GM12878 (cell line): ENCODE measurements at regions of chr15 and their contacts with region 1.

Region 1: GRCh38 chr15:101008158-101009139 is 89.3 kb downstream of the LRRK1 start:
- DNase-seq: peak; percentile 40
- ATAC-seq: peak; percentile 95
- H3K4me3 ChIP-seq: peak overlapping the region; percentile 73
- H3K27ac ChIP-seq: peak overlapping the region; percentile 40; the same call in 1 of the 2 replicates
- H3K4me1 ChIP-seq: peaks cover 11% of the 10 kb centered on the region
- H3K27me3 ChIP-seq: no peaks in the 10 kb centered on the region
- CTCF ChIP-seq: peak; percentile 96 to 100 (median 98)
- EP300 ChIP-seq: no peak
- POLR2A ChIP-seq: no peak; the same call in none of the 2 replicates
- RAD21 ChIP-seq: peak; percentile 67

Region 2: DNA sequence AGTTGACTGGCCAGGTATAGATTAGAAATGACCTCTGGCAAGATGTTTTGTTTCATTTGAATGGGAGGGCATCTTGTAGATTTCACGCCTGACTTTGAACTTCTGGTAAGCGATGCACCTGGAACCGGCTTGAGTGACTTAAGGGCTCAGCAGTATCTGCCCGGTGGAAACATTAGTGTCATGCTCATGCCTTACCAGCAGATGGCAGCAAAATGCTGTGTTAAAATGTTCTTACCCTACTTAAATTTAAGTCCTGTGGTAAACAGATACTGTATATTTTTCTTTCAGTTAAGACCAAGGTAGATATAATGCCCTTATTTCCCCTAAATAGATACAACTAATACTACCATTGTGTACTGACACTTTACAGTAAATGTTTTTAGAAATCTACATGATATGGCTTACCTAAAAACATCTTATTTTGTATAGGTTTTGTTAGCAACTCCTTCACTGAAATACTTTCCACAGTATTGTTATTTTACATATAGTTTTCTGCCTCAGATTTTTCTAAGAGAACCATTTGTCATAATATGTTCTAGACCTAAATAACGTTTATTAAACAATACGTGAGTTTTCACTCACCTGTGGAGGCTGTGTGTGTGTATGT is 380.6 kb before region 1 on chr15:
- CTCF ChIA-PET with region 1: interaction called, 13 read pairs
- POLR2A ChIA-PET with region 1: no interaction called
- RAD21 ChIA-PET with region 1: no interaction called
- SMC1A ChIA-PET with region 1: interaction called, 9 read pairs
- in situ Hi-C with region 1: loop called (anchors 5 kb)
- intact Hi-C with region 1: loop called (anchors 2 kb)
- DNase-seq: peak; percentile 43
- ATAC-seq: peak; percentile 92
- H3K4me3 ChIP-seq: no peak overlapping the region
- H3K27ac ChIP-seq: no peak overlapping the region
- H3K4me1 ChIP-seq: no peaks in the 10 kb centered on the region
- H3K27me3 ChIP-seq: no peaks in the 10 kb centered on the region
- CTCF ChIP-seq: peak; percentile 73 to 86 (median 80); a peak in 5 of 6 replicates
- EP300 ChIP-seq: no peak
- POLR2A ChIP-seq: no peak
- RAD21 ChIP-seq: peak; percentile 73

Region 3: GRCh38 chr15:100873029-100873677 is 135.3 kb before region 1 on chr15:
- CTCF ChIA-PET with region 1: interaction called, 22 read pairs
- POLR2A ChIA-PET with region 1: no interaction called
- RAD21 ChIA-PET with region 1: interaction called, 11 read pairs
- SMC1A ChIA-PET with region 1: interaction called, 5 read pairs
- in situ Hi-C with region 1: no loop called
- intact Hi-C with region 1: no loop called
- DNase-seq: peak; percentile 39
- ATAC-seq: peak; percentile 87
- H3K4me3 ChIP-seq: no peak overlapping the region
- H3K27ac ChIP-seq: no peak overlapping the region
- H3K4me1 ChIP-seq: no peaks in the 10 kb centered on the region
- H3K27me3 ChIP-seq: peaks cover 3% of the 10 kb centered on the region in 2 experiments; a peak in 3 of 4 replicates
- CTCF ChIP-seq: peak; percentile 80 to 93 (median 89)
- EP300 ChIP-seq: no peak
- POLR2A ChIP-seq: no peak
- RAD21 ChIP-seq: peak; percentile 82

Region 4: DNA sequence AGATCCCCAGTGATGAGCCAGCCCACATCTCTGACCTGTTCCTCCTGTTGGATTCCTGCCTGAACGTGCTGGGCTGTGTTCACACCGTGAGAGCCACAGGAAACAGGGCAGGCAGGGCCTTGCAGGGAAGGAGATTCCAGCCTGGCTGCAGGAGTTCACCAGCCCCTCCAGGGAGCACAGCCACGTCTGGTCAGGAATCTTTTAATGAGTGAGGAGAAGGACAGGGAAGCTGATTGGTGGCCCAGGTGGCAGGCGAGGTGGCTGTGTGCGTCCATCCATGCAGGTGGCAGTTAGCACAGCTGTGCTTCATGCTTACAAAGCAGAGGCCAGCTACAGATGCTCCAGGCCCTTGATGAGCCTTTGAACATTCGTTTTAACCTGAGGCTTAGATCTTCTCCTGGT is 78.8 kb before region 1 on chr15:
- CTCF ChIA-PET with region 1: interaction called, 567 read pairs
- POLR2A ChIA-PET with region 1: interaction called, 4 read pairs
- RAD21 ChIA-PET with region 1: interaction called, 11 read pairs
- SMC1A ChIA-PET with region 1: interaction called, 316 read pairs
- in situ Hi-C with region 1: no loop called
- intact Hi-C with region 1: no loop called
- DNase-seq: no peak
- ATAC-seq: peak; percentile 39
- H3K4me3 ChIP-seq: no peak overlapping the region
- H3K27ac ChIP-seq: peak overlapping the region; percentile 81
- H3K4me1 ChIP-seq: peaks cover 74% of the 10 kb centered on the region
- H3K27me3 ChIP-seq: no peaks in the 10 kb centered on the region
- CTCF ChIP-seq: no peak
- EP300 ChIP-seq: no peak
- POLR2A ChIP-seq: 0 out of 2 replicates have a peak, but pooled peaks have one; percentile 34
- RAD21 ChIP-seq: no peak

Region 5: DNA sequence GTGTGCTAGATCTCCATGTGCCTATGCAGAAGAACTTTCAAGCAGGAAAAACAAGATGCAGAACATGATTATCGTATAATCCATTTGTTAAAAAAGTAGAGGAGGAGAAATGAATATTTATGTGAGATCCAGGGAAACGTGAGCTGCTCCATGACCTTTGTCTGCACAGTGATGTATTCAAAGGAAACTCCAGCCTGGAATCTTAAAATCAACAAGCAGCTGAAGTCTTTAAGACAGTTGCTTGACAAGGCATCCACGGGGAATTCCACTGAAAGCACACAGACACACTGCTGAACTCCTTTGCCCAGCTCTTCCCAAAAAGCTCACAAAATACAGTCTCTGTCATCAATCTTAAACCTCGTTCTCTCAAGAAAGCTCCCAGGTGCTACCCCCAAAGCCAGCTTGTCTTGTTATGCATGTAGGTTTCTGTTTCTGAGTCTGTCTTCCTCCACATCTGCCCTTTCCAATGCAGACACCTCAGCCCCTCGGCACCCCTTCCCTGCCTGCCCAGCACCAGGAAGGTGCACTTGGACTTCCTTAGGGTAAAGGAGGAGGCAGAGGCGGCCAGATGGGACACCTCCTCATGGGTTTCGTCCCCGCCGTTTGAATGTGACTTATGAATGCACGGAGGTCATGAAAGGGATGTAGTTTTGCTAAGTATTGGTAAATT is 60.6 kb before region 1 on chr15:
- CTCF ChIA-PET with region 1: interaction called, 73 read pairs
- POLR2A ChIA-PET with region 1: interaction called, 4 read pairs
- RAD21 ChIA-PET with region 1: interaction called, 39 read pairs
- SMC1A ChIA-PET with region 1: interaction called, 56 read pairs
- in situ Hi-C with region 1: no loop called
- intact Hi-C with region 1: no loop called
- DNase-seq: no peak
- ATAC-seq: peak; percentile 79
- H3K4me3 ChIP-seq: peak overlapping the region; percentile 42
- H3K27ac ChIP-seq: peak overlapping the region; percentile 60
- H3K4me1 ChIP-seq: peaks cover 11% of the 10 kb centered on the region
- H3K27me3 ChIP-seq: no peaks in the 10 kb centered on the region
- CTCF ChIP-seq: no peak
- EP300 ChIP-seq: no peak
- POLR2A ChIP-seq: no peak; the same call in 1 of the 2 replicates
- RAD21 ChIP-seq: no peak

Region 6: DNA sequence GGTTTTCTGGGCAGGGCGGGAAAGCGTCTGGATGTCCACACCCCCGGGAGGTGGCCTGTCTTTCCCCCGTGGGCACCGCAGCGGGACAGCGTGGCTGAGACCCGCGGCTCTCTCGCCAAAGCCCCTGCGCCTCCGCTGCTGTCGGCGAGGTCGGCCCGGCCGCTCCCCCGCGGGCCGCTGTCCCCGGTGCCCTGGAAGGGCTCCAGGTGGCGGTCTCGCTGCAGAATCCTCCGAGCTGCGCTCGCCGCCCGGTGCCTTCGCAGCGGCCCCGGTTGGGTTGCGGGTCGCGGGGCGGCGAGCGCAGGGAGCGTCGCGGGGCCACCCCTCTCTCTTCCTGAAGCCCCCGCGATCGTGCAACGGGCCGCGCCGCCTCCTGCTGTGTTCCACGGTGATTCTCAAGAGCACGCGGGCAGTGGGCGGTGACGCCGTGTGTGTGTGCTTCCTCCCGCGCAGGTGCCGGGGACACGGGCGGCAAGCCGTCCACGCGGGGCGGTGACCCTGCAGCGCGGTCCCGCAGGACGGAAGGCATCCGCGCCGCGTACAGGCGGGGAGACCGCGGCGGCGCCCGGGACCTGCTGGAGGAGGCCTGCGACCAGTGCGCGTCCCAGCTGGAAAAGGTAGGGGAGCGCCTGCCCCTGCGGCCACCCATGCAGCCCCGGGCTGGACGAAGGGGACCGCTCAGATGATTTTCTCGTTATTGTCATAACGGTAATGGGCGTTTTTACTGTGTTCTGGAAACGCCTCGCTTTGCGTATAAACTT is 34.9 kb before region 1 on chr15:
- CTCF ChIA-PET with region 1: interaction called, 18 read pairs
- POLR2A ChIA-PET with region 1: interaction called, 4 read pairs
- RAD21 ChIA-PET with region 1: interaction called, 5 read pairs
- SMC1A ChIA-PET with region 1: interaction called, 4 read pairs
- in situ Hi-C with region 1: no loop called
- intact Hi-C with region 1: no loop called
- DNase-seq: no peak
- ATAC-seq: no peak
- H3K4me3 ChIP-seq: no peak overlapping the region
- H3K27ac ChIP-seq: no peak overlapping the region
- H3K4me1 ChIP-seq: no peaks in the 10 kb centered on the region; the same call in 1 of the 2 replicates
- H3K27me3 ChIP-seq: no peaks in the 10 kb centered on the region
- CTCF ChIP-seq: no peak
- EP300 ChIP-seq: no peak
- POLR2A ChIP-seq: 0 out of 2 replicates have a peak, but pooled peaks have one; percentile 21
- RAD21 ChIP-seq: no peak

Region 7: DNA sequence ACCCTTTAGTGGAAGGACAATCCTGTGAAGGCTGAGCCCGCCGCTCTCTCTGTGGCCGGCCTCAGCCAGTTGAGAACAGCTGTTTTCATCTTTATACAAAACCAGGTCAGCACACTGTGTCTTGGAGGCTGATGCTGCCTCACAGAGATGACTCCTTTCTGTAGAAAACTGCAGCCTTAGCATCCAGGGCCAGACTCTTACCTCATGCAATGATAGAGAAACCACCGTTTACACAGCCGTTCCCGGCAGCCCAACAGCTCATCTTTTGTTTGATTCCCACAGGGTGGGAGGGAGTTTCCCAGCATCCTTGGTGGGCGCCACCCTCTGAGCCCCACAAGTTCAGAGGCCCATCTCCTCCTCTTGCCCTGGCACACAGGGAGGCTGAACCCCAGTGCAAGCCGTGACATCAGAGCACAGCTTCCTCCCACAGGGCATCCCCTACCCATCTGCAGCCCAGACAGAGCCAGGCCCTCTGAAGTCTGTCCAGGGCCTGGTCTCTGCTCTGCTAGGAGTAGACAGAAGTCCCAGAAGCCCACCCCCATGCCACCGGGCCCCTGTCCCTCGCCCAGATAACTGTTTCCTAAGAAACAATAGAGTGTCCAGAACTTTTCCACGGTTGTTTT is 15.7 kb after region 1 on chr15:
- CTCF ChIA-PET with region 1: interaction called, 44 read pairs
- POLR2A ChIA-PET with region 1: no interaction called
- RAD21 ChIA-PET with region 1: interaction called, 3 read pairs
- SMC1A ChIA-PET with region 1: interaction called, 6 read pairs
- in situ Hi-C with region 1: no loop called
- intact Hi-C with region 1: no loop called
- DNase-seq: no peak
- ATAC-seq: no peak
- H3K4me3 ChIP-seq: no peak overlapping the region
- H3K27ac ChIP-seq: no peak overlapping the region
- H3K4me1 ChIP-seq: no peaks in the 10 kb centered on the region
- H3K27me3 ChIP-seq: no peaks in the 10 kb centered on the region
- CTCF ChIP-seq: no peak
- EP300 ChIP-seq: no peak
- POLR2A ChIP-seq: no peak
- RAD21 ChIP-seq: no peak

Region 8: GRCh38 chr15:101056366-101057334 is 48.2 kb after region 1 on chr15:
- CTCF ChIA-PET with region 1: no interaction called
- POLR2A ChIA-PET with region 1: no interaction called
- RAD21 ChIA-PET with region 1: no interaction called
- SMC1A ChIA-PET with region 1: no interaction called
- in situ Hi-C with region 1: no loop called
- intact Hi-C with region 1: no loop called
- DNase-seq: no peak
- ATAC-seq: no peak
- H3K4me3 ChIP-seq: no peak overlapping the region
- H3K27ac ChIP-seq: no peak overlapping the region
- H3K4me1 ChIP-seq: no peaks in the 10 kb centered on the region
- H3K27me3 ChIP-seq: no peaks in the 10 kb centered on the region
- CTCF ChIP-seq: no peak
- EP300 ChIP-seq: no peak
- POLR2A ChIP-seq: no peak
- RAD21 ChIP-seq: no peak

Region 9: DNA sequence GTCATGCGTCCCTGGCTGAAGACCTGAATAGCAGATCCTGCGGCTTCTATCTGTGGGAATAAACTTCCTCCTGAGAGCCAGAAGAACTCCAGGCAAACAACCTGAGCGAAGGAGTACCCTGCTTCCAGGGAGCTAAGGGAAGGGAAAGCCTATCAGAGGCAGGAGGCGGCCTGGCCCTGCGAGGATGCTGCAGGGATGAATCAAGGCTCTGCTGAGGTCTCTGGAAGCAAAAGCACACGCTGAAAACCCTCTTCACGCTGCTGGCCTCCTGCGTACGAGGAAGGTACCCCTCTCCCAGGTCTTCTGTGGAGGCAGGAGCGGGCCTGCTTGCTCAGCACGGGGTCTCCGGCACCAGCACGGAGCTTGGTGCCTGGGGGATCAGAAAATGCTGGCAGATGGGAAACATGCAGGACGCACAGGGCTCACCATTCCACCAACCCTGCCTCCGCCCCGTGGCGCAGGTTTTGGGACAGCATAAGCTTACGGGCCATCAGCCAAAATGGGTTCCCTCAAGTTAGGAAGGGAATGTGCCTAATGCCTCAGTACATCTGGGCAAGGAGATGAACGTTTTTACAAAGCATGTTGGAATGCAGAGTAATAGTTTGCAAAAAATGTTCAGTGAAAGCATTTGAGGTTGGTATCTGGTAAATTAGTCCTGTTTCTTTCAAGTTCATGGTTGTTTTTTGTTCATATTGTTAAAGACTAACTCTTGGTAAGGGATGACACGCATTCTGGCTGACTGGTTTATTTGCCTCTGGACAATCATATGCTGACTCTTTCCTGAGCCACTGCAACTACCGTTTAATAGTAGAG is 171.1 kb after region 1 on chr15:
- CTCF ChIA-PET with region 1: no interaction called
- POLR2A ChIA-PET with region 1: no interaction called
- RAD21 ChIA-PET with region 1: no interaction called
- SMC1A ChIA-PET with region 1: no interaction called
- in situ Hi-C with region 1: no loop called
- intact Hi-C with region 1: no loop called
- DNase-seq: no peak
- ATAC-seq: no peak
- H3K4me3 ChIP-seq: no peak overlapping the region
- H3K27ac ChIP-seq: no peak overlapping the region
- H3K4me1 ChIP-seq: peaks cover 4% of the 10 kb centered on the region; the same call in 1 of the 2 replicates
- H3K27me3 ChIP-seq: no peaks in the 10 kb centered on the region
- CTCF ChIP-seq: no peak
- EP300 ChIP-seq: no peak
- POLR2A ChIP-seq: no peak
- RAD21 ChIP-seq: no peak